CD14-positive monocyte (primary cell): ENCODE measurements at regions of chr20 and their contacts with region 1.

Region 1: GRCh38 chr20:47125583-47126373 is 230.7 kb downstream of the ZMYND8 start:
- DNase-seq: no peak
- H3K4me3 ChIP-seq: no peak overlapping the region
- H3K4me3 Mint-ChIP-seq: peak overlapping the region in 1 of 2 donors; percentile 44
- H3K27ac ChIP-seq: peak overlapping the region; percentile 93 to 97
- H3K27ac Mint-ChIP-seq: peak overlapping the region; percentile 96 to 99 (median 98)
- H3K4me1 ChIP-seq: peaks cover 27 to 29% of the 10 kb centered on the region in 2 donors
- H3K4me1 Mint-ChIP-seq: peaks cover 30% of the 10 kb centered on the region
- H3K27me3 ChIP-seq: no peaks in the 10 kb centered on the region
- H3K27me3 Mint-ChIP-seq: peaks cover 4 to 18% (median 8%) of the 10 kb centered on the region in 3 donors
- CTCF ChIP-seq: no peak

Region 2: DNA sequence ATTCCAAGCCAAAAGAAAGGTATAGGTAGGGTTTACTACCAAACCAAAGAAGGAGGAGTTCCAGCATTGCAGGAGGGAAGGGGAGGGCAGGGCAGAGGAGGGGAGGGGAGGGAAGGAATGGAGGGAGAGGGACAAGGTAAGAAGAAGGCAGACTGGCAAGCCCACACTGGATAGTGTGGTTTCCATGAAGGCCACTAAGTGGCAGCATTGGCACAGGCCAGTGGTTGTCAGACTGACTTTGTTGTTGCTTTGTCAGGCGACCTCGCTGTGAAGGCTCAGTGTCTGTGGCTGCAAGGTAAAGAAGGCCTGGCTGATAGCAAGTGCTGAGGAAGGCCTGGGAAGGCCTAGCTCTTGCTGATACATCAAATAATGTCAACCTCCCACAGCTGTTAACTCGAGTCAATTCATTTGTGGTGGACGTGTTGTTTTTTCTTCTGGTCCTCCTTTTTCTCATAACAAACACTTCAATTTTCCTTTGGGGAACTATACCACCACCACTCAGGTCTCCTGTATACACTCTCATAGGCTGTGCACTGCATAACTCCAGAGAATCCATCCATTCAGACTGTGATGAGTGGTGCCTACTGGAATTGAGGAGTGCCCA is 604.7 kb before region 1 on chr20:
- intact Hi-C with region 1: no loop called
- DNase-seq: peak; percentile 23 to 60 (median 54)
- H3K4me3 ChIP-seq: no peak overlapping the region
- H3K4me3 Mint-ChIP-seq: no peak overlapping the region
- H3K27ac ChIP-seq: no peak overlapping the region
- H3K27ac Mint-ChIP-seq: no peak overlapping the region
- H3K4me1 ChIP-seq: no peaks in the 10 kb centered on the region
- H3K4me1 Mint-ChIP-seq: peaks cover 2% of the 10 kb centered on the region
- H3K27me3 ChIP-seq: no peaks in the 10 kb centered on the region
- H3K27me3 Mint-ChIP-seq: peaks cover 2 to 8% (median 4%) of the 10 kb centered on the region in 3 donors
- CTCF ChIP-seq: peak; percentile 78

Region 3: GRCh38 chr20:47141955-47142765 is 16.4 kb after region 1 on chr20:
- intact Hi-C with region 1: loop called in 1 of 2 experiments (anchors 2 kb)
- DNase-seq: no peak
- H3K4me3 ChIP-seq: no peak overlapping the region
- H3K4me3 Mint-ChIP-seq: no peak overlapping the region
- H3K27ac ChIP-seq: peak overlapping the region in 1 of 2 donors; percentile 89
- H3K27ac Mint-ChIP-seq: peak overlapping the region in 4 of 7 donors; percentile 91 to 98 (median 96)
- H3K4me1 ChIP-seq: peaks cover 41 to 44% of the 10 kb centered on the region in 2 donors
- H3K4me1 Mint-ChIP-seq: peaks cover 52% of the 10 kb centered on the region
- H3K27me3 ChIP-seq: no peaks in the 10 kb centered on the region
- H3K27me3 Mint-ChIP-seq: peaks cover 3 to 8% (median 8%) of the 10 kb centered on the region in 3 donors
- CTCF ChIP-seq: no peak

Region 4: GRCh38 chr20:47438577-47439381 is 313.0 kb after region 1 on chr20:
- intact Hi-C with region 1: no loop called
- DNase-seq: peak; percentile 87 to 93 (median 89)
- H3K4me3 ChIP-seq: peak overlapping the region in 1 of 3 experiments; percentile 1
- H3K4me3 Mint-ChIP-seq: peak overlapping the region in 1 of 2 donors; percentile 66
- H3K27ac ChIP-seq: peak overlapping the region; percentile 73 to 90
- H3K27ac Mint-ChIP-seq: peak overlapping the region; percentile 73 to 98 (median 96)
- H3K4me1 ChIP-seq: peaks cover 26 to 27% of the 10 kb centered on the region in 2 donors
- H3K4me1 Mint-ChIP-seq: peaks cover 24% of the 10 kb centered on the region
- H3K27me3 ChIP-seq: no peaks in the 10 kb centered on the region
- H3K27me3 Mint-ChIP-seq: peaks cover 0 to 5% (median 5%) of the 10 kb centered on the region in 3 donors
- CTCF ChIP-seq: no peak